GM10248 (cell line): ENCODE measurements at regions of chr1 and their contacts with region 1.

Region 1: GRCh38 chr1:38012363-38013226 is at the start of gene UTP11:
- DNase-seq: peak; percentile 95
- CTCF ChIP-seq: no peak

Region 2: GRCh38 chr1:37958690-37959089 is 53.9 kb before region 1 on chr1:
- CTCF ChIA-PET with region 1: no interaction called
- POLR2A ChIA-PET with region 1: no interaction called
- DNase-seq: no peak
- CTCF ChIP-seq: no peak

Region 3: DNA sequence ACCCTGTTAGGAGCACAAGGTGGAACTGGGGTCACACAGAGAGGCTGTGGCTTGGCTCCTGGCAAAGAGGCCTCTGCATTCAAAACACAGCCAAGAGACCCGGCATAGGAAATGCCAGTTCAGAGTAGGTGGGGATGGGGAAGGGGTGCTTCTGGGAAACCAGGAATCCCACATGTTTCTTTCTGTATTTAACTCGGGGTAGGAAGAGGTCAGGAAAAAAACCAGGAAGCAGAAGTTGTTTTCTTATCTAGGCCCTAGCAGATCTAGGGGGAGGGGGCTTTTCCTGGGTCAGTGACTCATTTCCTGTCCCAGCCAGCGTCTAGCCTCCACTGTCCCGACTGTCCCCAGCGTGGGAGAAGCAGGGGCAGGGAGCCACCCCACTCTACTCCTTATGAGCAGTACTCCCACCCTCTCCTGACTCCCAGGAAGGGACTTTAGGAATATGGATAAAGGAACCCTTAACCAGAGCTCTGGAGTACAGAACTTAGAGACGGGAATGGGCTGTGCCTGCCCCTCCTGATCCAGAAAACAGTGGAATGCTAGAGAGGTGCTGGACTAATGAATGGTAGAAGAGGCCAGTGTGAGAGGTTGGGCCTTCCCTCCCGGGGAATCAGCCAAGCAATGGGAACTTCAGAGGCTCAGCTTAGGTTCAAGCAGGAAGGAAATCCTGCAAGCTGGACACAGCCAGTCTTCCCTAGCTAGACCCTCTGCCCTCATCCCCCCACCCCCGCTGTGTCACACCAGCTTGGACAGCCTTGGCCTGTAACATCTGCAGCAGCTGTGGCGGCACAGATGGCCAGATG is 13.0 kb before region 1 on chr1:
- CTCF ChIA-PET with region 1: interaction called, 15 read pairs
- POLR2A ChIA-PET with region 1: interaction called, 6 read pairs
- DNase-seq: no peak
- CTCF ChIP-seq: no peak